ENCODE measurements at regions of chr1 and their contacts with region 1.

Region 1: GRCh38 chr1:112715264-112716053 is at the start of gene PPM1J:
- DNase-seq: peak; percentile 97
- ATAC-seq: peak; percentile 84
- H3K4me3 Mint-ChIP-seq: peak within 1 kb of the TSS; percentile 74
- H3K27ac Mint-ChIP-seq: no peak within 1 kb of the TSS
- H3K4me1 Mint-ChIP-seq: peaks cover 14% of the 10 kb centered on the region
- H3K27me3 Mint-ChIP-seq: peaks cover 18% of the 10 kb centered on the region
- total RNA-seq, gene PPM1J: 0.75 to 0.88 TPM

Region 2: DNA sequence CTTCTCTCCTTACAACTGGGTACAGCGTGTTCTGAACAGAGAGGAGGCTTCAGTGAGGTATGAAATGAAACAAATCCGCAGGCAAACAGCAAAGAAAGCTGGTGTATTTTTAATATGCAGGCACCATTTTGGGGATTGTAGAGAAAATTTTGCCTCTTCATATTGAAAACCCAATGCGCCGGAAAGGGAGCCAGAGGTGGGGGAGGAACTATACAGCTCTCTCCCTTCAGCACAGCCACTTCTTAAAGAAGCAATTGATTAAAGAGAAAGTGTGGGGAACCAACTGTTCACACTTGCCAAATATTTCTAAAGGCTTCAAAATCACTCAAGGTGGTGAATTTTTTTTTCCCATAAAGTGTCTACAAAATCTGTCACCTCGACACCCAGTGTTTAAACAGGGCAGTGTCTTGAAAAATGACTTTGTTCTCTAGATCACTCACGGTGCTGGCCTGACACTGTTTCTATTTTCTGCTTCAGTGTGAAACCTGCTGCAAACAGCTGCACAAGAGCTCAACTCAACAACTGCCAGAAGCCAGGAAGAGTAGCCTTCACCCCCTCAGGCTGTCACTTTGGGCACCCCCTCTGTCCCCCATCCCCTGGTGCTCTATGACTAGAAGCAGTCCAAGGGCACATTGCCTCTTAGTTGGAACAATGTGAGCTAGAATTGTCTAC is 443.2 kb before region 1 on chr1:
- CTCF ChIA-PET with region 1: no interaction called
- POLR2A ChIA-PET with region 1: no interaction called
- intact Hi-C with region 1: no loop called
- DNase-seq: no peak
- ATAC-seq: no peak
- H3K4me3 Mint-ChIP-seq: no peak overlapping the region
- H3K27ac Mint-ChIP-seq: no peak overlapping the region
- H3K4me1 Mint-ChIP-seq: no peaks in the 10 kb centered on the region
- H3K27me3 Mint-ChIP-seq: peaks cover 16% of the 10 kb centered on the region

Region 3: DNA sequence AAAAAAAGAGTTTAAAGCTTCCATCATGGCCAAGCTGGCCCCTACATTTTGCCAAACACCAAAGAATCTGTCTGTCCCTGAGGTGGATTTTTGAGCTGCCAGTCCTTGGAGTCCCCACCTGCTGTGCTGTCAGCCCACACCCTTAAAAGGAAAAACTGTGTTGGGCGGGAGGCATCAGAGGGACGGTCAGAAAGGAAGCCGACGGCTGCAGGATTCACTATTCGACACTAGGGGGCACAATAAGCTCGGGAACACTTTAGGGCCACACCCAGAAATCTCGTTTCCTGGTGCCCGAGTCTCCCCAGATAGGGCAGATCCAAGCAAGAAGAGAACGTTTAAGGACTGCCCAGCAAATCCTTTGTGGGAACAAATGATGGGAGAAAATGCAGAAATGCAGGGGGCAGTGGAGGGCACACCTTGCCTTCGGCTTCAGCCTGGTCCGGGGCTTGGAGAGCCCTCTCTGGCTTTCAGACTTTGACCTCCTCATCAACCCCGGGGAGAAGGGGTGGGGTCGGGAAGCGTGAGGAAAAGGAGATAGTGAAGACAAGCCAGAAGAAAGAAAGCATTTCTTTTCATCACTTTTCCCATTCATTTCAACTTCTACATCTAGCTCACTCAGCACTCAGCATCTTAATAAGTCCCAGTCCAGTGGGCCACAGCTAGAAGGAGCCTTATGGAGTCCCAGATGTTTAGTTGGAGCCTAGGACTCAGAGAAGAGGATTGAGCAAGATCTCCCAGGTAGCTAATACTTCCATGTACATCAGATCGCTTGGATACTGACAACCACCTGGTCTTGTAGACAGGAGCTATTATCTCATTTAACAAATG is 324.5 kb before region 1 on chr1:
- CTCF ChIA-PET with region 1: interaction called, 6 read pairs
- POLR2A ChIA-PET with region 1: no interaction called
- intact Hi-C with region 1: loop called (anchors 2 kb)
- DNase-seq: peak; percentile 89
- ATAC-seq: peak; percentile 76
- H3K4me3 Mint-ChIP-seq: peak overlapping the region; percentile 70
- H3K27ac Mint-ChIP-seq: no peak overlapping the region
- H3K4me1 Mint-ChIP-seq: peaks cover 32% of the 10 kb centered on the region
- H3K27me3 Mint-ChIP-seq: peaks cover 22% of the 10 kb centered on the region

Region 4: GRCh38 chr1:112515311-112516009 is 200.0 kb before region 1 on chr1:
- CTCF ChIA-PET with region 1: no interaction called
- POLR2A ChIA-PET with region 1: no interaction called
- intact Hi-C with region 1: no loop called
- DNase-seq: no peak
- ATAC-seq: no peak
- H3K4me3 Mint-ChIP-seq: no peak overlapping the region
- H3K27ac Mint-ChIP-seq: no peak overlapping the region
- H3K4me1 Mint-ChIP-seq: no peaks in the 10 kb centered on the region
- H3K27me3 Mint-ChIP-seq: no peaks in the 10 kb centered on the region

Region 5: GRCh38 chr1:112729909-112730308 is 14.4 kb after region 1 on chr1:
- CTCF ChIA-PET with region 1: interaction called, 12 read pairs
- POLR2A ChIA-PET with region 1: no interaction called
- intact Hi-C with region 1: no loop called
- DNase-seq: no peak
- ATAC-seq: no peak
- H3K4me3 Mint-ChIP-seq: no peak overlapping the region
- H3K27ac Mint-ChIP-seq: no peak overlapping the region
- H3K4me1 Mint-ChIP-seq: peaks cover 7% of the 10 kb centered on the region
- H3K27me3 Mint-ChIP-seq: peaks cover 8% of the 10 kb centered on the region

Region 6: GRCh38 chr1:112809253-112809684 is 93.8 kb after region 1 on chr1:
- CTCF ChIA-PET with region 1: interaction called, 157 read pairs
- POLR2A ChIA-PET with region 1: no interaction called
- intact Hi-C with region 1: loop called (anchors 1 kb)
- DNase-seq: peak; percentile 85
- ATAC-seq: peak; percentile 93
- H3K4me3 Mint-ChIP-seq: no peak overlapping the region
- H3K27ac Mint-ChIP-seq: no peak overlapping the region
- H3K4me1 Mint-ChIP-seq: no peaks in the 10 kb centered on the region
- H3K27me3 Mint-ChIP-seq: peaks cover 5% of the 10 kb centered on the region

Region 7: DNA sequence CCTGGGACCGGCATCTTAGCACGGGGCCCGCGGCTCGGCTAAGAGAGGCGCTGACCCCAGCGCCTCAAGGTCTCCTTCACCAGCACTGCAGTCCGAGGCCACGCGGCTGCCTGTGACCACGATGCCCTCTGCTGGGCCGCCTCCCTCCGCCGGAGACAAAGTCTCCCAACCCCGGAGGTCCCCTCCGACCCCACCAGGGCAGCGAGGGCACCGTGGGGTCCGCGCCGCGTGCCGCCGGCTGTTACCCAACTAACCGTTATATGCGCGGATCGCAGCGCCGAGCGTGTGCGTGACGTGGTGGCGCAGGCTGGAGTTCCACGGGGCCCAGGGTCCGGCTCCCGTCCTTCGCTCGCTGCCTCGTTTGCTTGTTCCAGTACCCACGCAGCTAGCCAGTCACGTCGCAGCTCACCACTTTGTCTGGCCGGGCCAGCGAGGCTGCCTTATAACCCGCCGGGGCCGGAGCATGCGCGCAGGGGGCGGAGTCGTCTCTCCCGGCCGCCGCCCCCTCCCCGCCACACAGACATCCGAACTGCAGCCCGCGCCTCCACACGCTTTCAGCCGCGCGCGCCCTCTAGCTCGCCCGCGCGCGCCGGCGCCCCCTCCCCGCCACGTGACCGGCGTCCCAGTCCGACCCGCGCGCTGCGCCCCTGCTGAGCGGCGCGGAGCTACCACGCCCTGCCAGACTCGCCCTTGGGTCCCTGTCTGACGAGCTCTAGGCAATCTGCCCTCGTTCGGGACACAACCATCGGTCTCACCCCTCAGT is 240.5 kb after region 1 on chr1 and contains the start of gene SLC16A1:
- CTCF ChIA-PET with region 1: no interaction called
- POLR2A ChIA-PET with region 1: no interaction called
- intact Hi-C with region 1: loop called (anchors 1 to 5 kb)
- DNase-seq: peak; percentile 96
- ATAC-seq: peak; percentile 75
- H3K4me3 Mint-ChIP-seq: peak within 1 kb of the TSS; percentile 97
- H3K27ac Mint-ChIP-seq: peak within 1 kb of the TSS; percentile 100
- H3K4me1 Mint-ChIP-seq: peaks cover 56% of the 10 kb centered on the region
- H3K27me3 Mint-ChIP-seq: no peaks in the 10 kb centered on the region
- total RNA-seq, gene SLC16A1: 70.0 to 70.4 TPM

Region 8: DNA sequence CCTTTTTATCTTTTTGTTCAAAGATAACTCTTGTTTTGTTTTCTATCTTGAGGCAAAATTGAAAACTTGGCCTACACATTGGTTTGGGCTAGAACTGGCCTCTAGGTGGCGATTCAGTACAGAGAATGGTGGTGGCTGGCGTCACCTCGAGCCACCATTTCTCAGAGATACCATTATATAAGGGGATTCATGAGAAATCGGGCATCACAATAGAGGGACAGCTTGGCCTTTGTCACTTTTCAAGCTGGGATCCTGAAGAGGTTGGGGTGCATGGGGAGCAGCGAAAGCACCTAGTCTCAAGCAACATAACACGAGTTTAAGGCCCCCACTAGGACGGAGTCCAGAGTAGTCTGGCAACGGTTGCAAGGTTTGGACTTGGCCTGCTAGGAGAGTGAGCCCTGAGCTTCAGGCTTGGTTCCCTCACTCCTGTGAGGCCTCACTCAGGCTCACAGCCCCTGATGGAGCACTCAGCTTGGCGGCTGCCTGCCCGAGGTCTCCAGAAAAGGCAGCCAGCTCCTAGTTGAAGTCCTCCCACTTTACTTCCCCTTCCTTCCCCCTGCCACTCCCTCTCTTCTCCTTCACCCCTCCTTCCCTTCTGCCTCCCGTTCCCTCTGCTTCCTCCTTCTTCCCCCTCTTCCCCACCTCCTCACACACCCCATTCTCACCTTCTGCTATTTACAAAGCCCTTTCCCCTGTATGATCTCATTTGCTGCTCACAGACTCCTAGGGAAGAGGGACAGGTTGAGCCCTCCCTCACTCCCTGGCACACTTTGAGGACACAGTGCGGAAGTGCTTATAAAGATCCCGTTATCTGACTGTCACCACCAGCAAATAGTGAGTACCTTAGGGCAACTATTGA is 425.4 kb after region 1 on chr1:
- CTCF ChIA-PET with region 1: no interaction called
- POLR2A ChIA-PET with region 1: no interaction called
- intact Hi-C with region 1: loop called in 1 of 2 experiments (anchors 5 kb)
- DNase-seq: peak; percentile 78
- ATAC-seq: peak; percentile 86
- H3K4me3 Mint-ChIP-seq: no peak overlapping the region
- H3K27ac Mint-ChIP-seq: no peak overlapping the region
- H3K4me1 Mint-ChIP-seq: peaks cover 33% of the 10 kb centered on the region
- H3K27me3 Mint-ChIP-seq: no peaks in the 10 kb centered on the region

Region 9: GRCh38 chr1:113811888-113812660 is 1096.6 kb after region 1 on chr1 and contains the start of gene RSBN1:
- CTCF ChIA-PET with region 1: no interaction called
- POLR2A ChIA-PET with region 1: no interaction called
- intact Hi-C with region 1: loop called in 1 of 2 experiments (anchors 5 kb)
- DNase-seq: peak; percentile 99
- ATAC-seq: peak; percentile 97
- H3K4me3 Mint-ChIP-seq: peak within 1 kb of the TSS; percentile 97
- H3K27ac Mint-ChIP-seq: peak within 1 kb of the TSS; percentile 97
- H3K4me1 Mint-ChIP-seq: peaks cover 33% of the 10 kb centered on the region
- H3K27me3 Mint-ChIP-seq: no peaks in the 10 kb centered on the region
- total RNA-seq, gene RSBN1: 22.1 to 24.3 TPM